ENCODE measurements at regions of chr12 and their contacts with region 1.

Region 1: DNA sequence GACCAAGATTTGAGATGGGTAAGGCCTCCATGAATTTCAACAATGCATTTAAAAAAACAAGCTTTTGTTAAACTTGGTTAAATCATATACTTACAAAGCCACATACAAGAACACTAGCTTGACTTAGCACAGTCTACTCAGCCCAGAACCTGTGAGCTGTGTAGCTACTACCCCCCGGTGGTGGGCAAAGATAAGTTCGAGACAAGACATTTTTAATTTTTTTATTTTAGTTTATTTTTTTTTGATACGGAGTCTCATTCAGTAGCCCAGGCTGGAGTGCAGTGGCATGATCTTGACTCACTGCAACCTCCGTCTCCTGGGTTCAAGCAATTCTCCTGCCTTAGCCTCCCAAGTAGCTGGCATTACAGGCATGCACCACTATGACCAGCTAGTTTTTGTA is 3.7 kb upstream of the NECAP1 start:
- DNase-seq: peak; percentile 52
- H3K4me3 ChIP-seq: no peak overlapping the region
- CTCF ChIP-seq: peak; percentile 44

Region 2: GRCh38 chr12:7832059-7832696 is 246.2 kb before region 1 on chr12:
- CTCF ChIA-PET with region 1: interaction called, 11 read pairs
- POLR2A ChIA-PET with region 1: no interaction called
- DNase-seq: peak; percentile 34
- H3K4me3 ChIP-seq: no peak overlapping the region
- CTCF ChIP-seq: peak; percentile 64

Region 3: GRCh38 chr12:7884689-7885088 is 193.7 kb before region 1 on chr12:
- CTCF ChIA-PET with region 1: no interaction called
- POLR2A ChIA-PET with region 1: no interaction called
- DNase-seq: no peak
- H3K4me3 ChIP-seq: no peak overlapping the region
- CTCF ChIP-seq: no peak

Region 4: GRCh38 chr12:8032242-8033152 is 45.9 kb before region 1 on chr12 and contains the start of gene FOXJ2:
- CTCF ChIA-PET with region 1: interaction called, 20 read pairs
- POLR2A ChIA-PET with region 1: interaction called, 3 read pairs
- DNase-seq: no peak
- H3K4me3 ChIP-seq: peak within 1 kb of the TSS; percentile 84
- CTCF ChIP-seq: no peak

Region 5: DNA sequence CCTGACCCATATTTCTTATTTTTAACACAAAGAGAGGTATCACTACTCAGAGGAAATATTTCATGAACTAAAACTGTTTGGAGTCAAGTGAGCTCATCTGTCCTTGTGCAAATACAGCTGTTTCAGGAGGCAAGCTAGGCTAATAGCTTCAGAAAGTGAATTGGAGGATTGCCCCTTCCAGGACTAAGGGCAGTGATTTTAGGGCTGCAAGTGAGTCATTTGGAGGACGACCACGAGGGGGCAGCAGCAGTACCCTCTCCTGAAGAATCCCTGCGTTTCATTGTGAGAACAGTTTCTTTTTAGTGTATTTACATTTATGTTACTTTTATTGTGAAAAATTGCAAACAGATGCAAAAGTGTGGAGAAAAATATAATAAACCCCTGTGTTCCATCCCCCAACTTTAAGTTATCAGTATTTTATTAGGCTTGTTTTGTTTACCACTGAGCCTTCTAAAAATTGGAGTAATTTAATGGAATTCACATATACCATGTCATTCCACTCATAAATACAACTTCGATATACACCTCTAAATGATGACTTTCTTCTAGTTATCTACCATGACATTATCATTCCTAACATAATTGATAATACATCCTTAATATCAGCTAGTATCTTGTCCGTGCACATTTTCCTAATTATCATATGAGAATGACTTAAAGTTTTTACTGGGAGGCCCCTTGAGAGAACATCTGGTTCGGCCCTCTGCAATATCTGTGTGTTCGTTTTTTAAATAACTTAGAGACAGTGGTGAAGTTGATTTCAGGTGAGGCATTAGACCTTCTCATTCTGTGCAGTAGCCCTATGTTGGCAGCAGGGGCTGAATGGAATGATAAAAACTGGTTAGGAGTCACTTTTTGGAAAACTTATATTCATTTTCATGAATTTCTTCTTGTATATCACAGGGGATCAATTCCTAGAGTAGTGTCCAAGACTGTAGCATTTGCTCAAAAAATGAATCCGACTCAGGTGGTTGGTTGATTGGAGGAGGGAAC is 32.1 kb before region 1 on chr12:
- CTCF ChIA-PET with region 1: interaction called, 107 read pairs
- POLR2A ChIA-PET with region 1: interaction called, 3 read pairs
- DNase-seq: no peak
- H3K4me3 ChIP-seq: no peak overlapping the region
- CTCF ChIP-seq: peak; percentile 81

Region 6: DNA sequence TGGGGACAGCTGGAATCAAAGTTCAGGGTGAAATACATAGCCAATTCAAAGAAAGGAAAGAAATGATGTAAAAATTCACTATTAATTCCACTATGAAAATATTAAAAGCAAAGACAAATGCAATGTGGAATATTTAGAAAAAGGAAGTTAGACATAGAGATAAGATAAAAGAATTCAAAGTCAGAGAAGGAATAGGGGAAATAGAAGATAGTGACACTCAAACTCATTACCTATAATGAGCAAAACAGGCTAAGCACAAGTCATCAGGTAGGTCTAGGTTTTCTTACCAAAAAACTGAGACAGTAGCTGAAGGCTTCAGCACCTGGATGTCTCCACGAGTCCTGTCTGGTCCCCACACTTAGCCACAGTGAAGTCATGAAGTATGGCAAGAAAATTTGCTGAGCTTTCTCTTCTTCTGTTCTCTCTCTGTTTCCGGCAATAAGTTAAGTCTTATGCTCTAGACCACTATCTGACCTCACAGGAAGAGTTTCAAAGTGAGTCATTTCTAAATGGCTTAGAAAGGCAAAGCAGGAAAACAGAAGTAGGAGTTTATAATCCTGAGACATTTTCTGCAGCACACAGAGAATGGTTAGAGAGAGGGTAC is 12.3 kb before region 1 on chr12 and contains the start of gene C3AR1:
- CTCF ChIA-PET with region 1: interaction called, 11 read pairs
- POLR2A ChIA-PET with region 1: no interaction called
- DNase-seq: no peak
- H3K4me3 ChIP-seq: no peak within 1 kb of the TSS
- CTCF ChIP-seq: no peak

Region 7: GRCh38 chr12:8681041-8681902 is 602.9 kb after region 1 on chr12:
- CTCF ChIA-PET with region 1: no interaction called
- POLR2A ChIA-PET with region 1: no interaction called
- DNase-seq: no peak
- H3K4me3 ChIP-seq: no peak overlapping the region
- CTCF ChIP-seq: no peak

Measured in AG04449 (cell line).